Esophagus muscularis mucosa (tissue), 4 donors: ENCODE measurements at regions of chr3 and their contacts with region 1.

Region 1: GRCh38 chr3:184298759-184299496 is at the start of gene PSMD2:
- DNase-seq: peak; percentile 99
- H3K4me3 ChIP-seq: peak within 1 kb of the TSS; percentile 81 to 90 (median 83)
- H3K27ac ChIP-seq: peak within 1 kb of the TSS; percentile 78 to 88 (median 82)
- H3K4me1 ChIP-seq: peaks cover 14 to 37% (median 23%) of the 10 kb centered on the region in 4 donors
- H3K27me3 ChIP-seq: no peaks in the 10 kb centered on the region
- CTCF ChIP-seq: no peak
- EP300 ChIP-seq: no peak
- POLR2A ChIP-seq: peak; percentile 76
- total RNA-seq, gene PSMD2: 252 to 356 (median 274) TPM

Region 2: GRCh38 chr3:184341929-184342328 is 43.0 kb after region 1 on chr3:
- intact Hi-C with region 1: loop called (anchors 5 kb)
- DNase-seq: no peak
- H3K4me3 ChIP-seq: no peak overlapping the region
- H3K27ac ChIP-seq: no peak overlapping the region
- H3K4me1 ChIP-seq: peaks cover 35 to 60% (median 43%) of the 10 kb centered on the region in 4 donors
- H3K27me3 ChIP-seq: no peaks in the 10 kb centered on the region
- CTCF ChIP-seq: no peak
- EP300 ChIP-seq: no peak
- POLR2A ChIP-seq: no peak